ENCODE measurements at regions of chr3 and their contacts with region 1.

Region 1: GRCh38 chr3:141487521-141488252 is 860 bp downstream of the RASA2 start:
- DNase-seq: peak; percentile 87 to 94 (median 89)
- H3K4me3 ChIP-seq: peak overlapping the region; percentile 48 to 60
- H3K4me3 Mint-ChIP-seq: peak overlapping the region; percentile 87 to 97 (median 94)
- H3K27ac ChIP-seq: peak overlapping the region; percentile 91
- H3K27ac Mint-ChIP-seq: peak overlapping the region; percentile 72 to 99 (median 95)
- H3K4me1 ChIP-seq: peaks cover 64% of the 10 kb centered on the region
- H3K4me1 Mint-ChIP-seq: peaks cover 59 to 75% (median 65%) of the 10 kb centered on the region in 4 donors
- H3K27me3 ChIP-seq: no peaks in the 10 kb centered on the region
- H3K27me3 Mint-ChIP-seq: no peaks in the 10 kb centered on the region

Region 2: DNA sequence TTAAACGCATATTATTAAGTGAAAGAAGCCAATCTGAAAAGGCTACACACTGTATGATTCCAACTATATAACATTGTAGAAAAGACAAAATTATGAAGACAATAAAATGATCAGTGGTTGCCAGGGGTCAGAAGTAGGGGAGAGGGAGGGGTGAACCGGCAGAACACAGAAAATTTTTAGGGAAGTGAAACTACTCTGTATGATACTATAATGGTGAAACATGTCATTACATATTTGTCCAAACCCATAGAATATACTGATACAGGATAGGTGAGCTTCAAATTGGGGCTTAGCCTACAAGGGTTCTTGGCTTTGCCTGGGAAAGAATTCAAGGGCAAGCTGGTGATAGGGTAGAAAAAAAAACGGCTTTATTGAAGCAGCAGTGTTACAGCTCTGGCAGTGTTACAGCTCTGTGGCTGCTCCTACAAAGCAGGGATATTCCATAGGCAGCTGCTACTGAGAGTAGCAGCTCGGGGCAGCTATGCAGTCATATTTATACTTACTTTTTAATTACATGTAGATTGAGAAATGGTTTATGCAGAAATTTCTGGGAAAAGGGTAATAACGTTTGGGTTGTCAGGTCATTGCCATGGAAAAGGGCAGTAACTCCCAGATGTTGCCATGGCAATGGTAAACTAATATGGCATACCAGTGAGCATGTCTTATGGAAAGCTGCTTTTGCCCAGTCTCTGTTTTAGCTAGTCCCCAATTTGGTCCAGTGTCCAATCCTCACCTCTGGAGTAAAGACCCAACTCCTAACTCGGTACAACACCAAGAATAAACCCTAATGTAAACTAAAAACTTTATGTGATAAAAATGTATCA is 671.1 kb before region 1 on chr3:
- CTCF ChIA-PET with region 1: no interaction called
- POLR2A ChIA-PET with region 1: no interaction called
- intact Hi-C with region 1: no loop called
- DNase-seq: no peak
- H3K4me3 ChIP-seq: no peak overlapping the region
- H3K4me3 Mint-ChIP-seq: no peak overlapping the region
- H3K27ac ChIP-seq: no peak overlapping the region
- H3K27ac Mint-ChIP-seq: no peak overlapping the region
- H3K4me1 ChIP-seq: no peaks in the 10 kb centered on the region
- H3K4me1 Mint-ChIP-seq: no peaks in the 10 kb centered on the region
- H3K27me3 ChIP-seq: no peaks in the 10 kb centered on the region
- H3K27me3 Mint-ChIP-seq: peaks cover 3 to 5% of the 10 kb centered on the region in 2 donors

Region 3: DNA sequence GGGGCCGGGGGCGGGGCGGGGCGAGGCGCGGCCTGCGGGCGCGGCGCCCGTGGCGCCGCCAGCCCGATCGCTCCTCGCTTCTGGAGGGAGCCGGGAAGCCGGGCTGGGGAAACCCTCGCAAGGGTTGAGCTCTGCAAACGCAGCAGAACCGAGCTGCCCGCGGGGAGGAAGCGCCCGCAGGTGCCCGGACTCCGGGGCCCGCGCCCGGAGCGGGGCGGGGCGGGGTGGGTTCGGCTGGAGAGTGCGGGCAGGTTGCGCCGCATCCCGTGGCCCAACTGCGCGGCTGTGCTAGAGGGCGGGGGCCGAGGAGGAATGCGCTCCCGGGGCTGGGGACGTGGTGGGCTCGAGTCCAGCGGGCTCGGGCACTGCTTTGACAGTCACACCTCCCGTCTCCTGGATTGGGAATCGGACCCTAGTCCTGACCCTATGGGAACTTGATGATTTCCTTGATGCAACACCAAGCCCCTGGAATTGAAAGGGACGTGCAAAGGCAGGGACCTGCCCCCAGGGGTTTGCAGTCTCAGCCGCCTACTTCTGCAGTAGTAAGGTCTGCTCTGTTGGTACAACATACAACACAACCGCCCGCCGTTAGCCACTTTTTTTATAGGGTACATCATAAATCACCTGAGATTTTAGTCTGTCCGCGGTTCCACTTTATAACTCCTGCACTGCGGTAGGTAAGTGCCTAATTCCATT is 85.1 kb before region 1 on chr3:
- CTCF ChIA-PET with region 1: no interaction called
- POLR2A ChIA-PET with region 1: interaction called, 11 read pairs
- intact Hi-C with region 1: no loop called
- DNase-seq: peak; percentile 47 to 64 (median 52)
- H3K4me3 ChIP-seq: peak overlapping the region; percentile 55 to 79
- H3K4me3 Mint-ChIP-seq: peak overlapping the region; percentile 89 to 96 (median 95)
- H3K27ac ChIP-seq: peak overlapping the region; percentile 85
- H3K27ac Mint-ChIP-seq: peak overlapping the region; percentile 90 to 97 (median 95)
- H3K4me1 ChIP-seq: peaks cover 73% of the 10 kb centered on the region
- H3K4me1 Mint-ChIP-seq: peaks cover 46 to 75% (median 60%) of the 10 kb centered on the region in 4 donors
- H3K27me3 ChIP-seq: no peaks in the 10 kb centered on the region
- H3K27me3 Mint-ChIP-seq: no peaks in the 10 kb centered on the region

Region 4: GRCh38 chr3:141498598-141499223 is 11.0 kb after region 1 on chr3:
- CTCF ChIA-PET with region 1: interaction called, 6 read pairs
- POLR2A ChIA-PET with region 1: interaction called, 191 read pairs
- intact Hi-C with region 1: loop called (anchors 1 kb)
- DNase-seq: peak; percentile 91 to 95 (median 93)
- H3K4me3 ChIP-seq: peak overlapping the region; percentile 25 to 48
- H3K4me3 Mint-ChIP-seq: peak overlapping the region; percentile 74 to 91 (median 84)
- H3K27ac ChIP-seq: peak overlapping the region; percentile 65
- H3K27ac Mint-ChIP-seq: peak overlapping the region in 6 of 7 donors; percentile 96 to 98 (median 97)
- H3K4me1 ChIP-seq: peaks cover 83% of the 10 kb centered on the region
- H3K4me1 Mint-ChIP-seq: peaks cover 34 to 73% (median 56%) of the 10 kb centered on the region in 4 donors
- H3K27me3 ChIP-seq: no peaks in the 10 kb centered on the region
- H3K27me3 Mint-ChIP-seq: no peaks in the 10 kb centered on the region

Region 5: GRCh38 chr3:141530133-141530768 is 42.6 kb after region 1 on chr3:
- CTCF ChIA-PET with region 1: no interaction called
- POLR2A ChIA-PET with region 1: interaction called, 37 read pairs
- intact Hi-C with region 1: loop called (anchors 1 kb)
- DNase-seq: peak; percentile 44 to 54 (median 52)
- H3K4me3 ChIP-seq: no peak overlapping the region
- H3K4me3 Mint-ChIP-seq: peak overlapping the region; percentile 16 to 84 (median 74)
- H3K27ac ChIP-seq: peak overlapping the region; percentile 37
- H3K27ac Mint-ChIP-seq: peak overlapping the region; percentile 68 to 96 (median 92)
- H3K4me1 ChIP-seq: peaks cover 87% of the 10 kb centered on the region
- H3K4me1 Mint-ChIP-seq: peaks cover 51 to 73% (median 64%) of the 10 kb centered on the region in 4 donors
- H3K27me3 ChIP-seq: no peaks in the 10 kb centered on the region
- H3K27me3 Mint-ChIP-seq: no peaks in the 10 kb centered on the region

Region 6: DNA sequence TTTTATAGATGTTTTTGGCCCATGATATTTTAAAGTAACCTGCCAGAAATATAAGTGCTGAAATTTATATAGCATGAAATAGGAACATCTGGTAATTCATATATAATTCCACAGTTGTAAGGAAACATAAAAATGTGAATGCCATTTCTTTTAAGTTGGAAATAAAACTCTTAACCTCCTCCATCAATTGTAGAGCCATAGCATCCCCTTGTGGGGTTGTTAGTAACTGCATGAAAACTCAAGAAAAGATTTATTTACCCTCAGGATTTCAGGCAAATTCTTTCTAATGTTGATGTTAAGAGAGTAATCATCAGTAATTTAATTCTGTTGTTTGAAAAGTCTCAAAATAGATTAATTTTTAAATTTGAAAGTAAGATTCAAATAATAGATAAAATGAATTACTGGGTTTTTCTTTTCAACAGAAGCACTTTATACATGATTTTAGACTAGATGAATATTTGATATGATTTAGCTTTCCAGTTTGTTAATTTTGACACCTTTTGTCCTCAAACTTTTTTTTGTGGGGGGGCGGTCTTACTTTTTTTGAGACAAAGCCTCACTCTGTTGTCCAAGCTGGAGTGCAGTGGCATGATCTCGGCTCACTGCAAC is 73.8 kb after region 1 on chr3:
- CTCF ChIA-PET with region 1: interaction called, 12 read pairs
- POLR2A ChIA-PET with region 1: interaction called, 95 read pairs
- intact Hi-C with region 1: no loop called
- DNase-seq: peak; percentile 55 to 73 (median 70)
- H3K4me3 ChIP-seq: no peak overlapping the region
- H3K4me3 Mint-ChIP-seq: no peak overlapping the region
- H3K27ac ChIP-seq: no peak overlapping the region
- H3K27ac Mint-ChIP-seq: peak overlapping the region in 6 of 7 donors; percentile 35 to 85 (median 78)
- H3K4me1 ChIP-seq: peaks cover 33% of the 10 kb centered on the region
- H3K4me1 Mint-ChIP-seq: peaks cover 15 to 22% (median 20%) of the 10 kb centered on the region in 4 donors
- H3K27me3 ChIP-seq: no peaks in the 10 kb centered on the region
- H3K27me3 Mint-ChIP-seq: no peaks in the 10 kb centered on the region